Activated CD4-positive, alpha-beta T cell treated with anti-CD3 and anti-CD28 coated beads for 36 hours (primary cell): ENCODE measurements at regions of chr11 and their contacts with region 1.

Region 1: GRCh38 chr11:9314291-9315036 is at the start of gene TMEM41B:
- DNase-seq: peak; percentile 100
- ATAC-seq: peak; percentile 95
- H3K4me3 Mint-ChIP-seq: peak within 1 kb of the TSS; percentile 99
- H3K27ac Mint-ChIP-seq: peak within 1 kb of the TSS; percentile 99
- H3K4me1 Mint-ChIP-seq: peaks cover 36% of the 10 kb centered on the region
- H3K27me3 Mint-ChIP-seq: peaks cover 11% of the 10 kb centered on the region
- total RNA-seq, gene TMEM41B: 20.2 to 29.3 TPM

Region 2: DNA sequence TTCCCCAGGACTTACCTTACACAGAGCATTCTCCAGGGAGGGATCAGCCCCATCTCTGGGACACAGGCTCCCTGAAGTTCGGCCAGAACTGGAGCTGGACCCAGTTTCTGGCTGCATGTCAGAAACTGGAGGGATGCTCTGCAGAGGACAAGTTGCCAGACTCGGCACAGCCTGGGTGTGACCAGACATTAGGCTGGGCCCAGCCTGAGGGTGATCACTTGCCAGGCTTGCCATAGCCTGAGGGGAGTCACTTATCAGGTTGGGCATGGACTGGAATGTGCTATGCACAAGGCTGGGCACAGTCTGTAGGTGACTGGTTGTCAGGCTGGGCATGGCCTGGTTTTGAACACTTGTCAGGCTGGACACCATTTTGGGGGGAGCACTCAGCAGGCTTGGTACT is 689.8 kb before region 1 on chr11:
- CTCF ChIA-PET with region 1: no interaction called
- POLR2A ChIA-PET with region 1: no interaction called
- intact Hi-C with region 1: no loop called
- DNase-seq: no peak
- ATAC-seq: no peak
- H3K4me3 Mint-ChIP-seq: no peak overlapping the region
- H3K27ac Mint-ChIP-seq: no peak overlapping the region
- H3K4me1 Mint-ChIP-seq: no peaks in the 10 kb centered on the region
- H3K27me3 Mint-ChIP-seq: no peaks in the 10 kb centered on the region

Region 3: GRCh38 chr11:8682303-8683114 is 632.0 kb before region 1 on chr11 and contains the starts of genes RPL27A and TRIM66:
- CTCF ChIA-PET with region 1: no interaction called
- POLR2A ChIA-PET with region 1: no interaction called
- intact Hi-C with region 1: loop called in 1 of 2 experiments (anchors 1 kb)
- DNase-seq: peak; percentile 99
- ATAC-seq: peak; percentile 96
- H3K4me3 Mint-ChIP-seq: peak within 1 kb of the TSS; percentile 97
- H3K27ac Mint-ChIP-seq: peak within 1 kb of the TSS; percentile 98
- H3K4me1 Mint-ChIP-seq: peaks cover 46% of the 10 kb centered on the region
- H3K27me3 Mint-ChIP-seq: no peaks in the 10 kb centered on the region
- total RNA-seq, gene RPL27A: 688 to 1,021 TPM
- total RNA-seq, gene TRIM66: 18.3 to 19.5 TPM

Region 4: DNA sequence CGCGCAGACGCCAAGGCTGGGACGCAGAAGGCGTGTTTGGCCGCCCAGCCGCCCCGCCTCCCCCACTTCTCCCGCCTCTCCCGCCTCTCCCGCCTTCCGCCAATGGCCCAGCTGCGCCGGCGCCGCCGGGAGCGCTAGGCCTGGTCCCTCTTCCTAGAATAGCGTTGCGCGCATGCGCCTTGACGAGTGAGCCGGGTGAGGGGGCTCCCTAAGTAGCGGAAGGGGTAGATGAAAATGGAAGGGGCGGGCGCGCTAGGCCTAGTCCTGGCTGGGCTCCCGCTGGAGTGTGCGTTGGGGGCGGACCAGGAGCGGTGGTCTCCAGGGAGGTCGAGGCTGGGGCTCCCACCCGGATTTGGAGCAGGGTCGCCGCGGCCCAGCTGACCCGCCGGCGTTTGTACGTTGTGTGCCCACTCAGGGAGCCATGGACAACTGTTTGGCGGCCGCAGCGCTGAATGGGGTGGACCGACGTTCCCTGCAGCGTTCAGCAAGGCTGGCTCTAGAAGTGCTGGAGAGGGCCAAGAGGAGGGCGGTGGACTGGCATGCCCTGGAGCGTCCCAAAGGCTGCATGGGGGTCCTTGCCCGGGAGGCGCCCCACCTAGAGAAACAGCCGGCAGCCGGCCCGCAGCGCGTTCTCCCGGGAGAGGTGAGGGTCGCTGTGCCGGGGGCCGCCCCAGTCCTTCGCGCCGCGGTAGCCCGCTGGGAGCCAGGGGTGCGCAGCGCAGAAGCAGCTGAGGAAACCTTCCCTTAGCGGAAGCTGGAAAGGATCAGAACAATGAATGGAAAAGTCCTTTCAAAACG is 403.2 kb before region 1 on chr11 and contains the start of gene AKIP1:
- CTCF ChIA-PET with region 1: no interaction called
- POLR2A ChIA-PET with region 1: no interaction called
- intact Hi-C with region 1: loop called in 1 of 2 experiments (anchors 1 kb)
- DNase-seq: peak; percentile 94
- ATAC-seq: peak; percentile 76
- H3K4me3 Mint-ChIP-seq: peak within 1 kb of the TSS; percentile 86
- H3K27ac Mint-ChIP-seq: peak within 1 kb of the TSS; percentile 89
- H3K4me1 Mint-ChIP-seq: peaks cover 45% of the 10 kb centered on the region
- H3K27me3 Mint-ChIP-seq: peaks cover 6% of the 10 kb centered on the region
- total RNA-seq, gene AKIP1: 29.8 to 32.2 TPM

Region 5: DNA sequence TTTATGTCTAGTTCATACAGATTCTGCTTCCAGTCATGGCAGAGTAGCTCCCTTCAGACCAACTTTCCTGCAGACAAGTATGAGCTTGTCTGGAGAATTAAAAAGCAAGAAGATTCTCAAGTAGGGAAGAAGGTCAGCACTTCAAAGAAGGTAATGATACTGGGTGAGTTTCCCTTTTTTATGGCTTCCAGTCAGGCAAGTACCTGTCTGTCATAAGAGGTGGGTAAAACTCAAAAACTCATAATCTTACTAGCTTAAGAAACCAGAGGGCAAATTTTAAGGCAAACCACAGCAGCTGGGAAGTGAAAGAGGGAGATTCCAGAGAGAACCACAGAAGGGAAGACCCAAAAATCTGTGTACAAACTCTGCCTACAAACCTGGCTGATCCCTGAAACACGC is 103.5 kb before region 1 on chr11:
- CTCF ChIA-PET with region 1: no interaction called
- POLR2A ChIA-PET with region 1: interaction called, 14 read pairs
- intact Hi-C with region 1: loop called in 1 of 2 experiments (anchors 2 kb)
- DNase-seq: peak; percentile 41
- ATAC-seq: peak; percentile 39
- H3K4me3 Mint-ChIP-seq: no peak overlapping the region
- H3K27ac Mint-ChIP-seq: peak overlapping the region; percentile 76
- H3K4me1 Mint-ChIP-seq: peaks cover 68% of the 10 kb centered on the region
- H3K27me3 Mint-ChIP-seq: no peaks in the 10 kb centered on the region

Region 6: GRCh38 chr11:9351321-9351881 is 36.9 kb after region 1 on chr11:
- CTCF ChIA-PET with region 1: no interaction called
- POLR2A ChIA-PET with region 1: no interaction called
- intact Hi-C with region 1: no loop called
- DNase-seq: no peak
- ATAC-seq: no peak
- H3K4me3 Mint-ChIP-seq: no peak overlapping the region
- H3K27ac Mint-ChIP-seq: no peak overlapping the region
- H3K4me1 Mint-ChIP-seq: peaks cover 8% of the 10 kb centered on the region
- H3K27me3 Mint-ChIP-seq: no peaks in the 10 kb centered on the region

Region 7: DNA sequence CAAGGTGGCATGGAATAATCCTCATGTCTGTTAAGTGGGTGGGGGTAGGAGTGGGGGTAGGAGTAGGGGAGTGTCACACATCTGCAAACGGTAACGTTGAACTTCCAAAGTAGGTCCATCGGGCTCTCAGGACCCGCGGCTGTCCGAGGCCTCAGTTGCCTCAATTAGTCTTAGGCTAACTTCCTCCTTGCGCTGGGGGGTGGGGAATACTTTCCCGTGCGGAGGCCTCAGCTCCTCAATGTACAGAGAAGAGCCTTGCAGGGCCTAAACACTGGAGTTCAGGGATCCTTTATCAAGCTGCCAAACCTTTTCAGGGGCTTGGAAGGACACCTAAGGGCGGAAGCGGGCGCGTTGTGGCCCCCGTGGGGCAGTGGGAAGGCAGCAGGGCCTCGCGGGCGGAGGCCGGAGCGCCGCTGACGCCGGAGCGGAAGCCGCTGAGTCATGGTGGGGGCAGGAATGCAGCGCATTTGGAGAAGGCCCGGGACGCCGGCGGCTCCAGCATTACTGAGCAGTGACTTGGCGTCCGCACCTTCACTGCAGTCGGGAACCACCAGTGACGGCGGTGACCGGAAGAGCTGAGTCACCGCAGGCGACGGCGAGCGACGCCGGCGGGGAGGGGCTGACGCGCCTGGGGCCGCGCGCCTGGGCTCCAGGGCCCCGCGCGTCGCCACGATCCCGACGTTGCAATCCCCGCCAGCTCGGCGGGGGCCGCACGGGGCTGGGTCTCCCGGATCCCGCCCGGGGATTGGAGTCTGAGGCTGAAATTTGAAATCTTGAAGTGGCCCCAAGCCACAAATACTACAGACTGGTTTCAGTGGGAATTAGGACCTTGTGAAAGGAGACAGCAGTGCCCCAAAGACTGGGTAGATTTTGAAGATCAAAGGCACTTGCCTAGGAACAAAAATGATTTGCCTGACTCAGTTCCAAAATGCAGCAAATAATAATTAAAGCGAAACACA is 49.8 kb after region 1 on chr11:
- CTCF ChIA-PET with region 1: no interaction called
- POLR2A ChIA-PET with region 1: no interaction called
- intact Hi-C with region 1: loop called (anchors 1 kb)
- DNase-seq: peak; percentile 92
- ATAC-seq: peak; percentile 88
- H3K4me3 Mint-ChIP-seq: peak overlapping the region; percentile 62
- H3K27ac Mint-ChIP-seq: peak overlapping the region; percentile 88
- H3K4me1 Mint-ChIP-seq: peaks cover 30% of the 10 kb centered on the region
- H3K27me3 Mint-ChIP-seq: no peaks in the 10 kb centered on the region

Region 8: DNA sequence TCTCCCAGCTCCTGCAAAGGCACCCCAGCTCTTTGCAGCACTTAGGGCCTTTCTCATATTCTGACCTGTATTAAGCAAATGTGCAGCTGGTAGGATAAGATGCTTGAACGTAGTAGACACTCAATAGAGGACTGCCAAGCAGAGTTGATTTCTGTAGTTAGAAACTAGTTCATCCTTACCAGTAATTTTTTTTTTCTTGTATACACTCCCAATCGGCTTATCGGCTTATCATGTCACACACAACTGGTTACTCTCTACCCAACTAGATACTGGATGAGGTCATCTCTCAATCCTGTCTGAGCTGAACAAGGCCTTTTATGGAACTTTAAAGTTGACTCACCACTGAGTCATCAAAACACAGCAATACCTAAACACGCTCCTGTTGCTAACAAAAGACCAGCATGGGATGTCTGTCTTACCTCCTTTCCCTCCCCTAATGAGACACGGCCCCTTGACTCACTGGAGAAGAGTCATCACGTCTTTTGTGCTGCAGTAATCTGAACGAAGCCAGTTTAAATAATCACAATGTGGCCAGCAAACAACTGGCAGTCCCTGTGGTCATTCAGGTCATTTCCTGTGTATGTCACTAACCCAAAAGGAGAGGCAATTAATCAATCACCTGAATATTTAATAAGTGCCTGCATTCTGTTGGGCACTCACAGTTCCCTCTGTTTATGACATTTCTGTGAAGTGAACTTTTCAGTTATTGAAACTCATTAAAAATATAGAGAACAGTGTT is 251.5 kb after region 1 on chr11:
- CTCF ChIA-PET with region 1: no interaction called
- POLR2A ChIA-PET with region 1: no interaction called
- intact Hi-C with region 1: loop called in 1 of 2 experiments (anchors 1 kb)
- DNase-seq: peak; percentile 77
- ATAC-seq: peak; percentile 97
- H3K4me3 Mint-ChIP-seq: no peak overlapping the region
- H3K27ac Mint-ChIP-seq: peak overlapping the region; percentile 81
- H3K4me1 Mint-ChIP-seq: peaks cover 28% of the 10 kb centered on the region
- H3K27me3 Mint-ChIP-seq: peaks cover 3% of the 10 kb centered on the region